CD4-positive, alpha-beta memory T cell (primary cell): ENCODE measurements at regions of chr10 and their contacts with region 1.

Region 1: GRCh38 chr10:8053446-8054290 is 820 bp upstream of the GATA3 start:
- DNase-seq: peak; percentile 86 to 92 (median 89)
- H3K4me3 ChIP-seq: peak overlapping the region; percentile 84 to 94
- H3K4me3 Mint-ChIP-seq: peak overlapping the region; percentile 93 to 99 (median 98)
- H3K27ac ChIP-seq: peak overlapping the region; percentile 83
- H3K27ac Mint-ChIP-seq: peak overlapping the region; percentile 95 to 99 (median 98)
- H3K4me1 ChIP-seq: peaks cover 60% of the 10 kb centered on the region
- H3K4me1 Mint-ChIP-seq: peaks cover 13 to 66% (median 35%) of the 10 kb centered on the region in 4 donors
- H3K27me3 ChIP-seq: peaks cover 36% of the 10 kb centered on the region
- H3K27me3 Mint-ChIP-seq: peaks cover 20 to 27% of the 10 kb centered on the region in 2 donors

Region 2: GRCh38 chr10:7170626-7171322 is 882.9 kb before region 1 on chr10:
- CTCF ChIA-PET with region 1: no interaction called
- POLR2A ChIA-PET with region 1: no interaction called
- intact Hi-C with region 1: no loop called
- DNase-seq: no peak
- H3K4me3 ChIP-seq: no peak overlapping the region
- H3K4me3 Mint-ChIP-seq: no peak overlapping the region
- H3K27ac ChIP-seq: no peak overlapping the region
- H3K27ac Mint-ChIP-seq: no peak overlapping the region
- H3K4me1 ChIP-seq: no peaks in the 10 kb centered on the region
- H3K4me1 Mint-ChIP-seq: no peaks in the 10 kb centered on the region
- H3K27me3 ChIP-seq: no peaks in the 10 kb centered on the region
- H3K27me3 Mint-ChIP-seq: no peaks in the 10 kb centered on the region

Region 3: GRCh38 chr10:8037941-8038894 is 15.4 kb before region 1 on chr10:
- CTCF ChIA-PET with region 1: interaction called, 3 read pairs
- POLR2A ChIA-PET with region 1: interaction called, 8 read pairs
- intact Hi-C with region 1: loop called (anchors 2 kb)
- DNase-seq: peak in 4 of 5 donors; percentile 13 to 32 (median 16)
- H3K4me3 ChIP-seq: no peak overlapping the region
- H3K4me3 Mint-ChIP-seq: peak overlapping the region in 7 of 8 donors; percentile 2 to 59 (median 35)
- H3K27ac ChIP-seq: no peak overlapping the region
- H3K27ac Mint-ChIP-seq: peak overlapping the region in 5 of 7 donors; percentile 85 to 93 (median 88)
- H3K4me1 ChIP-seq: peaks cover 55% of the 10 kb centered on the region
- H3K4me1 Mint-ChIP-seq: peaks cover 24 to 62% (median 34%) of the 10 kb centered on the region in 4 donors
- H3K27me3 ChIP-seq: peaks cover 90% of the 10 kb centered on the region
- H3K27me3 Mint-ChIP-seq: peaks cover 62 to 67% of the 10 kb centered on the region in 2 donors

Region 4: GRCh38 chr10:8065651-8066050 is 12.0 kb after region 1 on chr10:
- CTCF ChIA-PET with region 1: interaction called, 5 read pairs
- POLR2A ChIA-PET with region 1: interaction called, 100 read pairs
- intact Hi-C with region 1: no loop called
- DNase-seq: no peak
- H3K4me3 ChIP-seq: no peak overlapping the region
- H3K4me3 Mint-ChIP-seq: peak overlapping the region in 7 of 8 donors; percentile 15 to 78 (median 31)
- H3K27ac ChIP-seq: no peak overlapping the region
- H3K27ac Mint-ChIP-seq: peak overlapping the region; percentile 44 to 96 (median 74)
- H3K4me1 ChIP-seq: peaks cover 98% of the 10 kb centered on the region
- H3K4me1 Mint-ChIP-seq: peaks cover 57 to 97% (median 77%) of the 10 kb centered on the region in 4 donors
- H3K27me3 ChIP-seq: no peaks in the 10 kb centered on the region
- H3K27me3 Mint-ChIP-seq: no peaks in the 10 kb centered on the region